ENCODE measurements at regions of chr19 and their contacts with region 1.

Region 1: DNA sequence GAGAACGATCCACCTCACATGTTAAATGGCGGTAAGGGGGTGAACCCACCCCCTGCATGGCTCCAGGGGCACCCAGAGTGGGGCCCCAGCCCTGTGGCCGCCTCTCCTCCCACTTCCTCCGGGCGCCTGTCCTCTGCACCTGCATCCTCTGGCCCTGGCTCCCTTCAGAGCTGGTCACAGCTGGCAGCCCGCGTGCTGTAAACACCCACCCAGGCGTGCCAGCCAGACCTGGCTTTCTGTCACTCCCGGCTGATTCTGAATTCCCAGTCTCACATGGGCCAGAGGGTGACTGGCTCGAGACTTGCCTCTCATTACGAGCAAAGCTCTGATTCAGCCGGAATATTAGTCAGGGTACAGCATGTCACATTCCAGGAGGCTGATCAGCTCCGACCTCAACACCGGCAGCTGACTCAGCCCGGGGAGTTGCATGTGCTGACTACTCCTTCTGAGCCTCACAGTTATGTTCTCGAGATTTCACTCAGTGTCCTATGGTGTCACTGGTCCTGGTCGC is 75.1 kb downstream of the GNG7 start:
- DNase-seq: peak in 2 of 10 donors; percentile 34 to 60
- ATAC-seq: peak in 1 of 2 donors; percentile 24
- H3K4me3 Mint-ChIP-seq: peak overlapping the region in 2 of 10 donors; percentile 24 to 73
- H3K27ac Mint-ChIP-seq: peak overlapping the region; percentile 56 to 89 (median 82)
- H3K4me1 Mint-ChIP-seq: peaks cover 15 to 83% (median 51%) of the 10 kb centered on the region in 4 donors
- H3K27me3 Mint-ChIP-seq: no peaks in the 10 kb centered on the region

Region 2: GRCh38 chr19:2602391-2603181 is 24.8 kb before region 1 on chr19:
- POLR2A ChIA-PET with region 1: interaction called, 17 read pairs
- DNase-seq: no peak
- ATAC-seq: no peak
- H3K4me3 Mint-ChIP-seq: no peak overlapping the region
- H3K27ac Mint-ChIP-seq: peak overlapping the region in 4 of 10 donors; percentile 18 to 63 (median 48)
- H3K4me1 Mint-ChIP-seq: peaks cover 6 to 22% (median 16%) of the 10 kb centered on the region in 4 donors
- H3K27me3 Mint-ChIP-seq: no peaks in the 10 kb centered on the region

Region 3: DNA sequence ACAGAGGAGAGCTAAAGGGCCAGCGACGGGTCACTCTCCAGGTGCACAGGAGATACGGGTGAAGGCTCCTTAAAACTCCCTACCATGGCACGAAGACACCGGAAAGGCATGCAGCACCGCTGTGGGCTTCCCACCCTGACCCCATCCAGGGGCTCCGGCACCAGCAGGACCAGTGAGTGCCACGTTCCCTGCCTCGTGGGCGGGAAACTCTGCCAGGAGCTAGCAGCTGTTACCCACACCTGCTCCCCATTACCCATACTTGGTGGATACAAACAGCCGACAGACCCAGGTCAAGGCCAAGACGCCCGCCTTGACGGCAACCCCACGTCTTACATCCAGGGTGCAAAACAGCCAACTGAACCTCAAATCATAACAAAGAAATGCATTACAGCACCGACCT is 18.5 kb after region 1 on chr19:
- POLR2A ChIA-PET with region 1: no interaction called
- DNase-seq: peak in 1 of 10 donors; percentile 52
- ATAC-seq: no peak
- H3K4me3 Mint-ChIP-seq: no peak overlapping the region
- H3K27ac Mint-ChIP-seq: no peak overlapping the region
- H3K4me1 Mint-ChIP-seq: no peaks in the 10 kb centered on the region
- H3K27me3 Mint-ChIP-seq: no peaks in the 10 kb centered on the region